Stomach (tissue), 19 donors: ENCODE measurements at regions of chr11 and their contacts with region 1.

Region 1: DNA sequence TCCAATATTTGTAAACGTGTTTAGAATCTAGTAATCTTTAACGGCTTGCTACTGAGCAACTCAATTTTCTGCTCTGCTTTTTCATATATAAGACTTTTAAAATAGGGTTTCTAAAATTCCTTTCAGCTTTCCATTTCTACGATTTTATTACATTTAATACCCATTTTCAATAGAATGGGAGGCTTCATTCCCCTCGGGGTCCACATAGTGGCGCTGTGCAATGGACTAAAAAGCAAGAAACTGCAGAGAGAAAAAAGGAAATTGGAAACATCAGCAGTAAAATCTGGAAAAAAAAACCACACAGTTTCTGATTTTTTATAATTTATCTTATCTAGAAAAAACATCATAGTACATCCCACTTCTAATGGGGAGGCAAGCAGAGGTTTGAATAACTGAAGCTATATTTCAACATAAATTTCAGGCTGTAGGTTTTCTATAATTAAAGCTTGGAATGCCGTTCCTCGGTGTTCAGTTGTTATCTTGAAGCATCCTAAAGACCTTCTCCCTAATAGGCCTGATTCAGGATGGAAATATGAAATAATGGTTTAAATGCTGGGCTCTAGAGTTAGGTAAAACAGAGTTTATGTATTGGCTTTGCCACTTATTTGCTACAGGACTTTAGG is 18.7 kb upstream of the JHY start:
- DNase-seq: peak in 1 of 2 donors; percentile 67
- H3K4me3 ChIP-seq: no peak overlapping the region
- H3K27ac ChIP-seq: no peak overlapping the region
- H3K4me1 ChIP-seq: peaks cover 0 to 4% (median 2%) of the 10 kb centered on the region in 4 donors
- H3K27me3 ChIP-seq: peaks cover 0 to 20% (median 3%) of the 10 kb centered on the region in 3 donors
- CTCF ChIP-seq: peak in 5 of 7 experiments; percentile 42 to 77 (median 69)
- EP300 ChIP-seq: no peak
- POLR2A ChIP-seq: no peak

Region 2: GRCh38 chr11:122998727-122999366 is 135.0 kb after region 1 on chr11:
- intact Hi-C with region 1: no loop called
- DNase-seq: no peak
- H3K4me3 ChIP-seq: no peak overlapping the region
- H3K27ac ChIP-seq: no peak overlapping the region
- H3K4me1 ChIP-seq: no peaks in the 10 kb centered on the region
- H3K27me3 ChIP-seq: peaks cover 0 to 51% (median 0%) of the 10 kb centered on the region in 3 donors
- CTCF ChIP-seq: no peak
- EP300 ChIP-seq: no peak
- POLR2A ChIP-seq: no peak

Region 3: GRCh38 chr11:123020968-123021367 is 157.2 kb after region 1 on chr11:
- intact Hi-C with region 1: loop called (anchors 5 kb)
- DNase-seq: peak in 1 of 2 donors; percentile 56
- H3K4me3 ChIP-seq: no peak overlapping the region
- H3K27ac ChIP-seq: no peak overlapping the region
- H3K4me1 ChIP-seq: peaks cover 0 to 8% (median 3%) of the 10 kb centered on the region in 4 donors
- H3K27me3 ChIP-seq: peaks cover 0 to 30% (median 0%) of the 10 kb centered on the region in 3 donors
- CTCF ChIP-seq: peak in 2 of 7 experiments; percentile 8 to 10
- EP300 ChIP-seq: no peak
- POLR2A ChIP-seq: no peak

Region 4: DNA sequence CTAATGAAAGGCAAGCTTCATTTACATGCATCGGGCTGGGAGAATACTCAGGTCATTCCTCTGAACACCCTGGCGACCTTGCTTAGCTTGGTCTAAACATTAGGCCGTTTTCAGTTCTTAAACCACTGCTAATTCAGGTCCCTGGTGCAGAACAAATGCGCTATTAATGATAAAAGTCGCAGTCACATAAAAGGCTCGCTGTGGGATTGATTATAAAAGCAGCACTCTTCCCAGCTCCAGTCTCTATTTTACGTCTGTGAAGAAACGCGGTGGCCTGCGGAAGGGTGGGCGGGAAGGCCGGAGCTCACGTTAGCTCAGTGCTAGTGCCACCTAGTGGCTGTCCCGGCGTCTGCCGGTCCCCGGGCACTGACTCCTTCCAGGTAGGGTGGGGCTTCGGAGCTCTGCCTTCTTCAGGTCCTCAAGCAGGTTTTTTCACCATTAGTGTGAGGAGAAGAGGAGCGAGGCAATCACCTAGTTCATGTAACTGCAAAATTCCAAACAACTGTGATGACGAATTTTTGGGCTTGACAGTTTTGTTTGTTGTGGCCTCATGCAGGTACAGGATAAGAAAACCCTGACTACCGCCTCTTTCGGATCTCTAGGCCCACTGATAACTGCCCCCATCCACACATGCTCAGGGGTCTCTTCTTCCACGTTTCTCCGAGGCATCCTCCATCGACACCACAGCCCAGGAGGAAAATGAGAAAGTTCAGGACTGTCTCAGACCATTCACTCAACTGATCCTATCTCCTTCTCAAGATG is 397.7 kb after region 1 on chr11:
- intact Hi-C with region 1: no loop called
- DNase-seq: peak; percentile 84 to 93
- H3K4me3 ChIP-seq: peak overlapping the region; percentile 21 to 35 (median 26)
- H3K27ac ChIP-seq: no peak overlapping the region
- H3K4me1 ChIP-seq: peaks cover 3 to 11% (median 8%) of the 10 kb centered on the region in 4 donors
- H3K27me3 ChIP-seq: peaks cover 0 to 35% (median 7%) of the 10 kb centered on the region in 3 donors
- CTCF ChIP-seq: peak in 4 of 7 experiments; percentile 64 to 84 (median 82)
- EP300 ChIP-seq: no peak
- POLR2A ChIP-seq: no peak